Calu3 (cell line): ENCODE measurements at regions of chr6 and their contacts with region 1.

Region 1: GRCh38 chr6:133130863-133131262 is 110.3 kb upstream of the EYA4 start:
- DNase-seq: peak; percentile 87
- H3K4me3 Mint-ChIP-seq: no peak overlapping the region
- H3K27ac Mint-ChIP-seq: no peak overlapping the region
- H3K4me1 Mint-ChIP-seq: peaks cover 56% of the 10 kb centered on the region
- H3K27me3 Mint-ChIP-seq: no peaks in the 10 kb centered on the region
- CTCF ChIP-seq: no peak

Region 2: GRCh38 chr6:133241086-133241900 is 110.4 kb after region 1 on chr6 and contains the start of gene EYA4:
- CTCF ChIA-PET with region 1: no interaction called
- intact Hi-C with region 1: loop called (anchors 10 kb)
- DNase-seq: peak; percentile 69
- H3K4me3 Mint-ChIP-seq: peak within 1 kb of the TSS; percentile 67
- H3K27ac Mint-ChIP-seq: peak within 1 kb of the TSS; percentile 81
- H3K4me1 Mint-ChIP-seq: peaks cover 6% of the 10 kb centered on the region
- H3K27me3 Mint-ChIP-seq: no peaks in the 10 kb centered on the region
- CTCF ChIP-seq: peak; percentile 12
- total RNA-seq, gene EYA4: 38.8 and 55.1 TPM in 2 replicates

Region 3: DNA sequence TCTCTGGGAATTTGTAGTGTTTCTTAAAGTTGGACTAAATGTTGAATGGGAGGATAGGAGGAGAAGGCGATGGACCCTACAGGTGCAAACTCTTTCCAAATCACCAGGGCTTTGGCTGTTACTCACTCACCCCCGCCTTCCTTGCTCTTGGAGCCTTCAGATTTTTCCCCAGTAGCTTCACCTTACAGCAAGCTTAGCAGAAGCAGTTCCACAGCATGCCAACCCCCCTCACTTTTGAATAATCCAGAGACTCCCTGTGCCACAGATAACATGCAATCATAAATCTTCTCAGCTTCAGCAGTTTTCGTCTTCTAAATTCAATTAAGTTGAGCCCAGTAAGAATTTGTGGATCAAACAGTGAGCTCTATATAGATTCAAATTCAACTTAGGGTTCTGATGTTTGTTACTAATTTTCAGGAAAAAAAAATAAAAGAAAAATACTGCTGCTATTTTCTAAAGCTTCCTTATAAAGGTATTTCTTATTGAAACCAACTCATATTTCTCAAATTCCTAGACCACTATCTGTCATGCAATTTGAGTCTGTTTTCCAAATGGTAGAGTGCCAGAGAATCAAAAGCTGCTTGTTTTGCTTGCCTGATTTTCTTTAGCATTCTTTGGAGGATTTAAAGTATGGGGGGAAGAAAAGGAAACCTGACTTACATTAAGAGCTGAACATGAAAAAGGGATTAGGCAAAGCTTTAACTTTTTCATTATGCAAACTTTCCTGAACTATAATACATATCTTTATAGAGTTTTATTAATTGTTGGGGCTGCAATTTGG is 276.6 kb after region 1 on chr6:
- CTCF ChIA-PET with region 1: no interaction called
- intact Hi-C with region 1: no loop called
- DNase-seq: no peak
- H3K4me3 Mint-ChIP-seq: no peak overlapping the region
- H3K27ac Mint-ChIP-seq: no peak overlapping the region
- H3K4me1 Mint-ChIP-seq: peaks cover 12% of the 10 kb centered on the region
- H3K27me3 Mint-ChIP-seq: no peaks in the 10 kb centered on the region
- CTCF ChIP-seq: no peak